ENCODE measurements at regions of chr19 and their contacts with region 1.

Region 1: GRCh38 chr19:15323496-15324227 is 8.7 kb downstream of the BRD4 start:
- DNase-seq: peak; percentile 77
- H3K4me3 ChIP-seq: no peak overlapping the region
- H3K27ac ChIP-seq: peak overlapping the region; percentile 51
- H3K4me1 ChIP-seq: peaks cover 31% of the 10 kb centered on the region
- H3K27me3 ChIP-seq: no peaks in the 10 kb centered on the region
- CTCF ChIP-seq: no peak

Region 2: GRCh38 chr19:15222738-15223648 is 100.7 kb before region 1 on chr19:
- CTCF ChIA-PET with region 1: no interaction called
- dilution Hi-C with region 1: loop called (anchors 5 kb)
- in situ Hi-C with region 1: no loop called
- intact Hi-C with region 1: no loop called
- DNase-seq: peak; percentile 80
- H3K4me3 ChIP-seq: peak overlapping the region; percentile 54 to 61 (median 59)
- H3K27ac ChIP-seq: no peak overlapping the region
- H3K4me1 ChIP-seq: peaks cover 12% of the 10 kb centered on the region
- H3K27me3 ChIP-seq: no peaks in the 10 kb centered on the region
- CTCF ChIP-seq: no peak

Region 3: DNA sequence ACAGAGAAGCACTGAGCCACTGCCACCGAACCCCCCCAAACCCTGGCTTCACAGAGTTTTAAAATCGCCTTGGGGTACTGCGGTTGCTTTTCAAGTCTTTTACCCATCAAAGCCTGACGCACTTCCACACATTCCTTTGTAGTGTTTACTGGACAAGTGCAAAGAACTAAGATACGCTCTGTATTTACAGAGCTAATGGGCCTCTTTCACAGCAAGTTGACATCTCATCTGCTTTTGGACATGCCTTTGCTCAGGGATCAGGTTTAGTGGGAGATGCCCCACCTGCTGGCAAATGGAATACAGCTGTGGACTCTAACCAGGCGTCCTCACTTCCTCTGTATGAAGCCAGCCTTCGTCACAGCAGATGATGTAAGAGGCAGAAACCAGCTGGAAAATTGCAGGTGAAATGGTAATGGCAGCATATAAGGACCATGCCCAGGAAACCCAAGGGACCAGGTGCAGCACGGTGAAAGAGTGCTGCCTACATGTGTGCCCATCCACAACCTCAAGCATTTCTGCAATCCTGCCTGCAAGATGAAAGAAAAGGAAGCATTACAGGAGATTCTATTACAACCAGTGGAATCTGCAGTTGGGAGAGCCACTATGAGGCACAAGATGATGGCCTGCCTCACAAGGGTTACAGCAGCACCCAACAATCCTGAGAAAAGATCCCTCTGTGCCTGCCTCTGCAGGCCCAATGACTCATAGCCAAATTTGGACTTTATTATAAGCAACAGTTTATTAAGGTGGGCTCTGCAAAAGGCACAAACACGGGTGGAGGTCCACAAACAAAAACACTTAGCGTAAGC is 26.0 kb before region 1 on chr19:
- CTCF ChIA-PET with region 1: no interaction called
- dilution Hi-C with region 1: loop called (anchors 5 kb)
- in situ Hi-C with region 1: no loop called
- intact Hi-C with region 1: no loop called
- DNase-seq: peak; percentile 65
- H3K4me3 ChIP-seq: no peak overlapping the region
- H3K27ac ChIP-seq: peak overlapping the region; percentile 19
- H3K4me1 ChIP-seq: peaks cover 67% of the 10 kb centered on the region
- H3K27me3 ChIP-seq: no peaks in the 10 kb centered on the region
- CTCF ChIP-seq: peak in 1 of 2 donors; percentile 44

Measured in mammary epithelial cell (primary cell).